PC-3 (cell line): ENCODE measurements at regions of chrX and their contacts with region 1.

Region 1: GRCh38 chrX:71482228-71482958 is 50.5 kb upstream of the OGT start:
- DNase-seq: peak; percentile 70
- ATAC-seq: peak; percentile 97
- H3K4me3 ChIP-seq: no peak overlapping the region
- H3K27ac ChIP-seq: peak overlapping the region; percentile 29
- H3K4me1 ChIP-seq: peaks cover 11% of the 10 kb centered on the region
- H3K27me3 ChIP-seq: no peaks in the 10 kb centered on the region
- CTCF ChIP-seq: no peak

Region 2: DNA sequence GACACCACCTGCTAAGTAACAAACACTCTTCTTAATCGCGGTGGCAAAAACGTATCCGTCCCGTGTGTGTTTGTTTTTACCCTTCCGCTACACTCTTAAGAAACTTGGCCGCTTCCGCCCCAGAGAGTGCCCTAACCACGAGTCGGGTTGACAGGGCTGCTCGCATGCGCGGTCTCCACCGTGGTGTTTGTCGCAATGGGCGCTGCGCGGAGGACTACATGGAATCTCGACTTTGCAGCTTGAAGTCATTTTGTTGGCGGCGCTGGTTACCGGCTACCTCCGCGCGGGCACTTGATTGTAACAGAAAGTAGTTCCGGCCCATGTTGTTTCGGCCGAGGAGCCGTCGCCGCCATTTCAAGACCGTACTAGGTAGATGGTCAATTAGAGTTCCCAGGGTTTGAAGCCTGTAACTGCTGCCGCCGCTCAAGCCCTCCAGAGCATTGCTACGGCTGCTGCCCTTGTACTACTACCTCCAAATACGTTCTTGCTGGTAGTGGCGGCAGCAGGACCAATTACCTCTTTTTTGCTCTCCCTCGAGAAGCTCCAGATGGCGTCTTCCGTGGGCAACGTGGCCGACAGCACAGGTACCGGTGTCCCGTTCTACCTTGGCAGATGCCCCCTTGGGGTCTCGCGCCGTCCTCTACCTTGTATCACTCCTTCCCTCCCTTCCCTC is 50.5 kb after region 1 on chrX and contains the start of gene OGT:
- CTCF ChIA-PET with region 1: no interaction called
- POLR2A ChIA-PET with region 1: no interaction called
- intact Hi-C with region 1: loop called (anchors 1 kb)
- DNase-seq: peak; percentile 96
- ATAC-seq: peak; percentile 86
- H3K4me3 ChIP-seq: peak within 1 kb of the TSS; percentile 90
- H3K27ac ChIP-seq: peak within 1 kb of the TSS; percentile 79
- H3K4me1 ChIP-seq: peaks cover 19% of the 10 kb centered on the region
- H3K27me3 ChIP-seq: no peaks in the 10 kb centered on the region
- CTCF ChIP-seq: no peak
- total RNA-seq, gene OGT: 94.2 and 99.8 TPM in 2 replicates

Region 3: GRCh38 chrX:71541210-71542022 is 59.0 kb after region 1 on chrX:
- CTCF ChIA-PET with region 1: no interaction called
- POLR2A ChIA-PET with region 1: no interaction called
- intact Hi-C with region 1: loop called (anchors 1 kb)
- DNase-seq: peak; percentile 46
- ATAC-seq: peak; percentile 37
- H3K4me3 ChIP-seq: peak overlapping the region; percentile 47; the same call in 1 of the 2 replicates
- H3K27ac ChIP-seq: peak overlapping the region; percentile 87
- H3K4me1 ChIP-seq: peaks cover 61% of the 10 kb centered on the region
- H3K27me3 ChIP-seq: no peaks in the 10 kb centered on the region
- CTCF ChIP-seq: no peak

Region 4: GRCh38 chrX:71558920-71559319 is 76.5 kb after region 1 on chrX:
- CTCF ChIA-PET with region 1: no interaction called
- POLR2A ChIA-PET with region 1: no interaction called
- intact Hi-C with region 1: loop called (anchors 2 kb)
- DNase-seq: no peak
- ATAC-seq: no peak
- H3K4me3 ChIP-seq: 0 out of 2 replicates have a peak overlapping the region, but pooled peaks have one; percentile 1
- H3K27ac ChIP-seq: peak overlapping the region; percentile 79
- H3K4me1 ChIP-seq: peaks cover 23% of the 10 kb centered on the region
- H3K27me3 ChIP-seq: no peaks in the 10 kb centered on the region
- CTCF ChIP-seq: no peak

Region 5: GRCh38 chrX:71671043-71671780 is 188.8 kb after region 1 on chrX:
- CTCF ChIA-PET with region 1: no interaction called
- POLR2A ChIA-PET with region 1: interaction called, 10 read pairs
- intact Hi-C with region 1: no loop called
- DNase-seq: peak; percentile 21
- ATAC-seq: no peak; the same call in 1 of the 2 replicates
- H3K4me3 ChIP-seq: no peak overlapping the region
- H3K27ac ChIP-seq: no peak overlapping the region
- H3K4me1 ChIP-seq: peaks cover 12% of the 10 kb centered on the region
- H3K27me3 ChIP-seq: no peaks in the 10 kb centered on the region
- CTCF ChIP-seq: no peak